T-cell (primary cell): ENCODE measurements at regions of chr5 and their contacts with region 1.

Region 1: DNA sequence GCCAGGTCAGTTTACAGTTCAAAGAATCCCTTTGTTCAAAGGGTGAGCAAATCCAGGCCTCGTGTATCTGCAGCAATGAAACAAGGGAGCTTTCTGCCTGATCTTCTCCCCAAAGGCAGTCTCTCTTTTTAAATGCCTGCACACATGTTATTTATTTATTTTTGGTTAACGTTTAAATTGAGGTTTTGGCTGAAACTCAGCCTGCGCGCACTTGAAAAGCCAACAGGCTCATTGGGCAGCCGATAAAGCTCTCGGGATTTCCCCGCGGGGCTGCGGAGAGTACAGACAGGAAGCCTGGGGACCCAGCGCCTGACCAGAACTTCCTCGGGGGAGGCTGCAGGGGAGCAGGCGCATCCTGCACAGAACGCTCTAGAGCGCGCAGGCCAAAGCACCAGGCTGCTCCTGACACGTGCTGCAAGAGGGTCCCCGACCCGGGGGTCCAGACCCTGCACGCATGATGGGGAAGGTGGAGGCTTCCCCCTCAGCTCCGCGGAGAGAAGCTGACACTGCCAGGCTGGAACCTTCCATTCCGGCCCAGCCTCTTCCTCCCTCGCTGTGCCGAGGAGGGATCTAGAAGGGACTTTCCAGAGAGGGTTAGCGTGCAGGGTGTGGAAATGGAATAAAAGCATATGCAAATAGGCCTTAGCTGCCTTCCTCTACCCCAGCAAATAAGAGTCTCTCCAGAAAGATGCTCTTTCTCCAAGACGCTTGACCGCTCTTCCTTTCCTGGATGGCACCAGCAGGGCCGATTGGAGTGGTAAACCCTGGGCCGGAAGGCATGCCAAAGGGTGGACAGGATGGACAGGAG is 46.1 kb downstream of the PTTG1 start:
- DNase-seq: peak; percentile 44 to 86 (median 70)
- ATAC-seq: peak; percentile 80 to 89 (median 86)
- H3K4me3 ChIP-seq: peak overlapping the region; percentile 45 to 61
- H3K4me3 Mint-ChIP-seq: peak overlapping the region; percentile 88 to 96 (median 89)
- H3K27ac ChIP-seq: peak overlapping the region; percentile 77
- H3K27ac Mint-ChIP-seq: peak overlapping the region; percentile 91 to 98
- H3K4me1 ChIP-seq: peaks cover 27 to 47% of the 10 kb centered on the region in 2 experiments
- H3K4me1 Mint-ChIP-seq: peaks cover 70 to 83% (median 79%) of the 10 kb centered on the region in 3 donors
- H3K27me3 ChIP-seq: no peaks in the 10 kb centered on the region
- H3K27me3 Mint-ChIP-seq: no peaks in the 10 kb centered on the region

Region 2: DNA sequence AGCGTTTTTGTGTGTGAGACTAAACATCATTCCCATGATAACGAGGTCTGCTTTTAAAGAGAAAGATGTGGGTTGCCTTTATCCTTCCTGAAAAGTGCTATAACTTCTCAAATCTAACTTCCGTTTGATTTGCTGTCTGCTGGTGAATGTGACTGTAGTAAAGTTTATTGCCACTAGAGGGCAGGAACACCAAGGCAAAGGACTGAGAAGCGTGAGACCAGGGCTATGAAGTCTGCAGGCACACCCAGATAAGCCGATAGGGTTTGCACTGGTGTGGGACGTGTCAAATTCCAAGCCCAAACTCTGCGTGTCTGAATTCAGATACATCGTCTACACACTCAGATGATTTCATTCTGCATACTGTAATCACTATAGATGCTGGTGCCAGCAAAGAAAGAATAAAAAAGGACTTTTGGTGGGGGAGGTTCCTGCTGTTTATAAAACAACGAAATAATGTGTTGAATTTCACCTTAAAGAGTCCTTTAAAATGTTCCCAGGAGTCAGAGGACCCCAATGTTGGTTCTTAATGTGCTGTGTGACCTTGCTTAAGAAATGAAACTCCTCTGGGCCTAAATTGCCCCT is 41.1 kb after region 1 on chr5:
- CTCF ChIA-PET with region 1: interaction called, 6 to 20 read pairs
- POLR2A ChIA-PET with region 1: interaction called in 1 of 2 experiments, 7 read pairs
- DNase-seq: peak in 33 of 35 experiments; percentile 14 to 92 (median 49)
- ATAC-seq: peak; percentile 71 to 83 (median 80)
- H3K4me3 ChIP-seq: no peak overlapping the region
- H3K4me3 Mint-ChIP-seq: no peak overlapping the region
- H3K27ac ChIP-seq: no peak overlapping the region
- H3K27ac Mint-ChIP-seq: peak overlapping the region; percentile 76 to 79
- H3K4me1 ChIP-seq: peaks cover 0 to 29% of the 10 kb centered on the region in 2 experiments
- H3K4me1 Mint-ChIP-seq: peaks cover 30 to 44% (median 31%) of the 10 kb centered on the region in 3 donors
- H3K27me3 ChIP-seq: peaks cover 0 to 3% of the 10 kb centered on the region in 2 experiments
- H3K27me3 Mint-ChIP-seq: peaks cover 3 to 13% of the 10 kb centered on the region in 2 donors